ENCODE measurements at regions of chr5 and their contacts with region 1.

Region 1: GRCh38 chr5:178075840-178076548 is 37.3 kb upstream of the N4BP3 start:
- DNase-seq: peak; percentile 70 to 83
- H3K4me3 ChIP-seq: 0 out of 2 replicates have a peak overlapping the region, but pooled peaks have one; percentile 6
- H3K4me3 Mint-ChIP-seq: peak overlapping the region; percentile 30
- H3K27ac Mint-ChIP-seq: no peak overlapping the region
- H3K4me1 ChIP-seq: no peaks in the 10 kb centered on the region
- H3K4me1 Mint-ChIP-seq: peaks cover 6% of the 10 kb centered on the region
- H3K27me3 ChIP-seq: peaks cover 1% of the 10 kb centered on the region; the same call in 1 of the 2 replicates
- H3K27me3 Mint-ChIP-seq: no peaks in the 10 kb centered on the region
- CTCF ChIP-seq: peak; percentile 87 to 89

Region 2: GRCh38 chr5:177509381-177509951 is 566.5 kb before region 1 on chr5 and contains the start of gene DOK3:
- CTCF ChIA-PET with region 1: no interaction called
- POLR2A ChIA-PET with region 1: no interaction called
- intact Hi-C with region 1: no loop called
- DNase-seq: no peak
- H3K4me3 ChIP-seq: no peak within 1 kb of the TSS
- H3K4me3 Mint-ChIP-seq: no peak within 1 kb of the TSS
- H3K27ac Mint-ChIP-seq: peak within 1 kb of the TSS; percentile 17
- H3K4me1 ChIP-seq: no peaks in the 10 kb centered on the region
- H3K4me1 Mint-ChIP-seq: peaks cover 6% of the 10 kb centered on the region
- H3K27me3 ChIP-seq: no peaks in the 10 kb centered on the region
- H3K27me3 Mint-ChIP-seq: no peaks in the 10 kb centered on the region
- CTCF ChIP-seq: no peak
- total RNA-seq, gene DOK3: 7.9 and 10.1 TPM in 2 replicates

Region 3: DNA sequence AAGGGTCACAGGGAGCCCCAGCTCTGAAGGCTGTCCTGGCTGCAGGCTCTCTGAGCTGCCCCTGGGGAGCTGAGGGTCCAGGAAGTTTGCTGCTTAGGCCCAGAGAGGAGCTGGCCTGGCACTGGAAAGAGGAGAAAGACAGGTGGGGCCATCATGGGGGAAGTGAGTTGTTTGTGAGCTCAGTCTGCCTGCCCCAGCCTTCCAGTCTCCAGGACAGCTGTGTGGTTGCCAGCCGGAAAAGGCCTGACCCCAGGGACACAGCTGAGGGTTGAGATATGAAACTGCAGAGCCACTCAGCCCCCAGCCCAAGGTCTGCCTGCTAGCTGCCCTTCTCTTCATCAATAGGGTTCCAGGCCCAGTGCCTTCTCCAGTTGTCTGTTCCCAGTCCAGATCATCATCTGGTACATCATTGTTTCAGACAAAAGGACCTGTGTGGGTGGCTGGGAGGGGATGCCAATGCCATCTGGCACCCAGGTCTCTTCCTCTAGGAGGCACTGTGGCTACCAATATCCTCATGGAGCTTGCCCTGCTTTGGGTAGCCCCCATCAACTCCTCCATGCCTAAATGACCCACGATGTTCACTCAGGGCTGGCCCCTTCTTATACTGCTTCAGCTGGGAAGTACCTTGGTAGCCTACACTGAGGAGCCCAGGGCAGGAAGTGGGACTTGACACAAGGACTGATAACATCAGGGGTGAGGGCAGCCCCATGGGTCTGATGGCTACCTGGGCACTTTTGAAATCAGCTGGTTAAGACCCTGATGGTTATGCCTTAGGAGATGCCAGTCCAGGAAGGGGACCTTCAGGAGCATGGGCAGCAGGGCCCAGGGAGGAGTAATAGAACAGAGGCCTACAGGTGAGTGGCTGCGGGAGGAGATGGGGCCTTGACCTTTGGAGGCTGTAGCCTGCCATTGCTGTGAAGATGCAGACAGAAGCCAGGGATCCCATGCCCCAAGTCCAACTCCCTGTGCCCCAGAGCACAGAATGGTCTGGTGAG is 554.8 kb before region 1 on chr5:
- CTCF ChIA-PET with region 1: no interaction called
- POLR2A ChIA-PET with region 1: no interaction called
- intact Hi-C with region 1: no loop called
- DNase-seq: no peak
- H3K4me3 ChIP-seq: no peak overlapping the region
- H3K4me3 Mint-ChIP-seq: no peak overlapping the region
- H3K27ac Mint-ChIP-seq: peak overlapping the region; percentile 76
- H3K4me1 ChIP-seq: 0 out of 2 replicates have a peak, but pooled peaks cover 7% of the 10 kb centered on the region
- H3K4me1 Mint-ChIP-seq: peaks cover 15% of the 10 kb centered on the region
- H3K27me3 ChIP-seq: no peaks in the 10 kb centered on the region
- H3K27me3 Mint-ChIP-seq: no peaks in the 10 kb centered on the region
- CTCF ChIP-seq: peak in 1 of 2 experiments; percentile 6

Region 4: DNA sequence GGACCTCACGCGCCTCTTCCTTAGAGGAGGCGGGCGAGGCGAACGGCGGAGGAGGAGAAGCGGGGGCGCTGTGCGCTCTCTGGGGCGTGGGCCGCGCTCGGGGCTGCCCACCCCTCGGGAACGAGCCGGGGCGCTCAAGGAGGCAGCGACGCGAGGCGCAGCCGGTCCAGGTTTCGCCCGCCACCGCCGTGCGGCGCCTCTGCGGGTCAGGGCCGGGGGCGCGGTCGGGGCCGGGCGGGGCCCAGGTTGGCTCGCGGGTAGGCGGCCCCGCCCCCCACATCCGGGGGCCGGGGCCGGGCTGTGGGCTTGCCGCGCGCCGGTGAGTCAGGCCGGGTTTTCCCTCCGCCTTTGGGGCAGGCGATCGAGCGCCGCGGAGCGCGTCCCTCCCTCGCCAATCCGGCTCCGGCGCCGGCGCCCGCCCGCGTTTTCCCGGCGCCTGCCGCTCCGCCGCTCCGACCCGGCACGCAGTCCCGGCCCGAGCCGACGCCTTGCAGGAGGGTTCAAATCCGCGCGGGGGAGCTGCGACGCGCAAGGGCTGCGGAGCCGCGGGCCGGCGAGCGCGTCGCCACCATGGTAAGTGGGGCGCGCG is 37.3 kb after region 1 on chr5 and contains the start of gene N4BP3:
- CTCF ChIA-PET with region 1: interaction called, 26 read pairs
- POLR2A ChIA-PET with region 1: no interaction called
- intact Hi-C with region 1: loop called (anchors 5 kb)
- DNase-seq: peak; percentile 85 to 91
- H3K4me3 ChIP-seq: peak within 1 kb of the TSS; percentile 74
- H3K4me3 Mint-ChIP-seq: peak within 1 kb of the TSS; percentile 89
- H3K27ac Mint-ChIP-seq: peak within 1 kb of the TSS; percentile 16
- H3K4me1 ChIP-seq: peaks cover 19% of the 10 kb centered on the region
- H3K4me1 Mint-ChIP-seq: peaks cover 12% of the 10 kb centered on the region
- H3K27me3 ChIP-seq: no peaks in the 10 kb centered on the region
- H3K27me3 Mint-ChIP-seq: peaks cover 5% of the 10 kb centered on the region
- CTCF ChIP-seq: no peak
- total RNA-seq, gene N4BP3: 2.9 and 3.2 TPM in 2 replicates

Region 5: DNA sequence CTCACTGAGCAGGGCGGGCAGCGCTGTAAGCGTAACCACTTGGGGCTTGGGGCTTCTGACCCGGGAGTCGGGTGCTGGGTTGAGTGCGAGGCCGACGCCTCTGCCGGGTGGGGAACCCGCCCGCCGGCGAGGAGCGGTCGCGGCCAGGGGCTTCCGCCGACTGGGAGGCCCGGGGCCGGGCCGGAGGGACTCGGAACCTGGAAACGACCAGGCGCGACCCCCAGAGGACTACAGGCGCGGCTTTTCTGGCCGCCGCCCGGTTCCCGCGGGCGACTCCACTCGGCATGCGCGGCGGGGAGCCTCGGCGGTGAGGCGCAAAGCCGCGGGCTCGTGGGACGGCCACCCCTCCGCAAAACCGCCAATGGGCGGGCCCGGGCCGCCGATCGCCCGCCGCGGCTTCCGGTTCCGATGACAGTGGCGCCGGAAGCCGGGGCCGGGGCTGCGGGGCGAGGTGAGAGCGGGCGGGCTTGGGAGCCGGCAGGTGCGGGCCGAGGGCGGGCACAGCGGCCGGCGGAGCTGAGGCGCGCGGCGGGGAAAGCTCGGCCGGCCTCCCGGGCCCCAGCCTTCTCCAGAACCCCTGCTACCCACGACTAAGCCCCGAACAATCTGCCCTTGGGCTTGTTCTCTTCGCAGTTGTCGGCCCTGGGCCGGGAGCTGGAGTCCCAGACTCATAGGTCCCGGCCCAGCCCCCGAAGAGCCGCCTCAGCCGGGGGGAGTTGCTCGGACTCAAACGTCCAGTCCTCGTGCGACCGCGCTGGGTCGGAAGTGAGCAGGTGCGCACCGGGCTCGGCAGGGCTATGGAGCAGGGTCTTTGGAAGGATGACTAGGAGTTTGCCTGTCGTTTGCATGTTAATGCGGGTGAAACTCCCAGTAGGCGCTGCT is 54.9 kb after region 1 on chr5 and contains the start of gene RMND5B:
- CTCF ChIA-PET with region 1: interaction called, 10 read pairs
- POLR2A ChIA-PET with region 1: no interaction called
- intact Hi-C with region 1: no loop called
- DNase-seq: peak; percentile 89 to 93
- H3K4me3 ChIP-seq: peak within 1 kb of the TSS; percentile 94
- H3K4me3 Mint-ChIP-seq: peak within 1 kb of the TSS; percentile 75
- H3K27ac Mint-ChIP-seq: peak within 1 kb of the TSS; percentile 72
- H3K4me1 ChIP-seq: peaks cover 6% of the 10 kb centered on the region; the same call in 1 of the 2 replicates
- H3K4me1 Mint-ChIP-seq: peaks cover 8% of the 10 kb centered on the region
- H3K27me3 ChIP-seq: no peaks in the 10 kb centered on the region
- H3K27me3 Mint-ChIP-seq: no peaks in the 10 kb centered on the region
- CTCF ChIP-seq: no peak
- total RNA-seq, gene RMND5B: 45.6 and 48.4 TPM in 2 replicates

Region 6: DNA sequence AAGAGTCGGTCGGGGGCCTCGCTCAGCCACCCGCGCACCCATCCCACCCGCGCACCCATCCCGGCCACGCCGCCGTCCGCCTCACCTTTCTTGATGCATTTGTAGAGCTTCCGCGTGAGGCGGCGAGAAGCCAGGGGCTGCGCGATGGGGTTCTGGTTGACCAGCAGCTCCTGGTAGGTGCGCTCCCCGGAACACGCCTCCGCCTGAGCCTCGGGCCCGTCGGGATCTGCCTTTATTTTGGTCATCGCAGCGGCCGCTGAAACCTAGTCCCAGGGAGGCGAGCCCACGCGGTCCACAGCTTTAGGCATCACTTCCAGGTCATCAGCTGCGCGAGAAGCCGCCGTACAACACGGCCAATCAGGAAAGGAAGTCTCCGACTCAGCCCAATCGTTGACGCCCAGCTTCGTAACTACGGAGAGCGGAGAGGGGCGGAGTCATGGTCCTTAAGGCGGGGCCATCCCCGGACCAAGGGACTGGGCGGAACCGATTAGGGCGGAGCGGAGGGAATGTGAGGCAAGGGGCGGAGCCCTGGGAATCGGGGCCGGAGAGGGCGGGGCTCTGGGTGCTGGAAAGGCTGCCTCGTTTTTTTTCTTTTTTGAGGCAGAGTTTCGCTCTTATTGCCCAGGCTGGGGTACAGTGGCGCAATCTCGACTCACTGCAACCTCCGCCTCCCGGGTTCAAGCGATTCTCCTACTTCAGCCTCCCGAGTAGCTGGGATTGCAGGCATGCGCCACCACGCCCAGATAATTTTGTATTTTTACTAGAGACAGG is 77.8 kb after region 1 on chr5 and contains the start of gene NHP2:
- CTCF ChIA-PET with region 1: interaction called, 69 read pairs
- POLR2A ChIA-PET with region 1: no interaction called
- intact Hi-C with region 1: no loop called
- DNase-seq: peak; percentile 98
- H3K4me3 ChIP-seq: peak within 1 kb of the TSS; percentile 65
- H3K4me3 Mint-ChIP-seq: peak within 1 kb of the TSS; percentile 94
- H3K27ac Mint-ChIP-seq: peak within 1 kb of the TSS; percentile 92
- H3K4me1 ChIP-seq: peaks cover 5% of the 10 kb centered on the region
- H3K4me1 Mint-ChIP-seq: no peaks in the 10 kb centered on the region
- H3K27me3 ChIP-seq: no peaks in the 10 kb centered on the region
- H3K27me3 Mint-ChIP-seq: no peaks in the 10 kb centered on the region
- CTCF ChIP-seq: no peak
- total RNA-seq, gene NHP2: 127 and 142 TPM in 2 replicates

Region 7: GRCh38 chr5:178210073-178210526 is 134.1 kb after region 1 on chr5:
- CTCF ChIA-PET with region 1: no interaction called
- POLR2A ChIA-PET with region 1: no interaction called
- intact Hi-C with region 1: no loop called
- DNase-seq: no peak
- H3K4me3 ChIP-seq: no peak overlapping the region
- H3K4me3 Mint-ChIP-seq: no peak overlapping the region
- H3K27ac Mint-ChIP-seq: peak overlapping the region; percentile 53
- H3K4me1 ChIP-seq: peaks cover 9% of the 10 kb centered on the region; the same call in 1 of the 2 replicates
- H3K4me1 Mint-ChIP-seq: peaks cover 18% of the 10 kb centered on the region
- H3K27me3 ChIP-seq: no peaks in the 10 kb centered on the region
- H3K27me3 Mint-ChIP-seq: no peaks in the 10 kb centered on the region
- CTCF ChIP-seq: no peak